ENCODE measurements at regions of chr5 and their contacts with region 1.

Region 1: DNA sequence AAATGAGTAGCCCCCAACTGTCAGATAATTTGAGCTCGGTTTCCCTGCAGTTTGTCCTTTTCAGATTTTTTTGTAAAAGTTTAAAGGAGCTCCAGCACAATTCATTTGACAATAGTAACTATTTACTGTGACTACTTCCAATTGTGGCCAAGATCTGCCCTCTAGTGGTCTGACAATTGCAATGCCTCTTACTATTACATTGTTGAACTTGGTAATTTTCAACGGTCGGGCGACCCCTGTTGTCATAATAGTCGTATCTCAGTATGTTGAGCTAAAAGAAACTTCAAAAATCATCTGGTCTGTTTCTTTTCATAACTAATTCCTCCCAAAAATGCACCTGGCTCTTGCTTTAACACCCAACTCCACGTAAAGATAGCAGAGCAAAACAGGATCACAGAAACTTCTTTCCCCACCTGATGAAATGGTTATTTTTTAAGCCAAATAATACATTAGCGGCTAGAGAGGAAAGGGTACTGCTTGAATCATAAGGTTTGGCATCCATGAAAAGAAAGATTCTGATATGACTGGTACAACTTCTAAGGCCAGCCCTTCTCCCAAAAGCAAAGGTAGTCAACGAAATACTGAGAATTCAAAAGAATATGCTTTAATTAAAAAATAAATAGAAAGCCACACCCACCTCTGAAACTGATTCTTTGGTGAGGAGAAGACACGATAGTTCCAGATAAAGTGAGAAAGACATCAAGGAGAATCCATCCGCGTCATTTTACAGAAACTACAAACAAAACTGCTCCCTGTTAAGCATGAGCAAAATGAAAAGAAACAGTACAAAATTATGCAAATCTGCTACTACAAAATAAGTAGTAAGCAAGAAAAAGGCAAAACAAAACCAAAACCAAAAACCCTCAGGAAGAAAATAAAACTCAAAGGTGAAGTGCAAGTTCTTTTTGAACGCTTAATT is 76.9 kb upstream of the HTR4 start:
- DNase-seq: peak; percentile 52
- H3K4me3 ChIP-seq: no peak overlapping the region; a peak in 1 of 4 replicates
- H3K27ac ChIP-seq: peak overlapping the region in 1 of 2 experiments; percentile 56; a peak in 2 of 4 replicates
- H3K4me1 ChIP-seq: peaks cover 0 to 15% of the 10 kb centered on the region in 2 experiments; a peak in 3 of 4 replicates
- H3K27me3 ChIP-seq: no peaks in the 10 kb centered on the region
- CTCF ChIP-seq: peak; percentile 99
- EP300 ChIP-seq: no peak
- RAD21 ChIP-seq: peak; percentile 99

Region 2: GRCh38 chr5:148290271-148291195 is 440.7 kb before region 1 on chr5:
- CTCF ChIA-PET with region 1: interaction called, 31 read pairs
- POLR2A ChIA-PET with region 1: no interaction called
- DNase-seq: peak; percentile 16
- H3K4me3 ChIP-seq: no peak overlapping the region
- H3K27ac ChIP-seq: no peak overlapping the region
- H3K4me1 ChIP-seq: no peaks in the 10 kb centered on the region
- H3K27me3 ChIP-seq: no peaks in the 10 kb centered on the region
- CTCF ChIP-seq: peak; percentile 54
- EP300 ChIP-seq: no peak
- RAD21 ChIP-seq: peak; percentile 71

Region 3: GRCh38 chr5:148437249-148437648 is 294.0 kb before region 1 on chr5:
- CTCF ChIA-PET with region 1: interaction called, 704 read pairs
- POLR2A ChIA-PET with region 1: no interaction called
- DNase-seq: no peak
- H3K4me3 ChIP-seq: no peak overlapping the region
- H3K27ac ChIP-seq: no peak overlapping the region
- H3K4me1 ChIP-seq: no peaks in the 10 kb centered on the region
- H3K27me3 ChIP-seq: no peaks in the 10 kb centered on the region
- CTCF ChIP-seq: no peak
- EP300 ChIP-seq: no peak
- RAD21 ChIP-seq: no peak

Region 4: GRCh38 chr5:148532962-148533670 is 198.1 kb before region 1 on chr5:
- CTCF ChIA-PET with region 1: interaction called, 12 read pairs
- POLR2A ChIA-PET with region 1: no interaction called
- DNase-seq: no peak
- H3K4me3 ChIP-seq: no peak overlapping the region
- H3K27ac ChIP-seq: no peak overlapping the region
- H3K4me1 ChIP-seq: no peaks in the 10 kb centered on the region
- H3K27me3 ChIP-seq: no peaks in the 10 kb centered on the region
- CTCF ChIP-seq: no peak
- EP300 ChIP-seq: no peak
- RAD21 ChIP-seq: no peak

Region 5: GRCh38 chr5:148697180-148697808 is 33.9 kb before region 1 on chr5:
- CTCF ChIA-PET with region 1: interaction called, 33 read pairs
- POLR2A ChIA-PET with region 1: no interaction called
- DNase-seq: no peak
- H3K4me3 ChIP-seq: peak overlapping the region in 1 of 2 experiments; percentile 44; a peak in 1 of 4 replicates
- H3K27ac ChIP-seq: peak overlapping the region in 1 of 2 experiments; percentile 7; a peak in 1 of 4 replicates
- H3K4me1 ChIP-seq: no peaks in the 10 kb centered on the region
- H3K27me3 ChIP-seq: no peaks in the 10 kb centered on the region
- CTCF ChIP-seq: no peak
- EP300 ChIP-seq: no peak
- RAD21 ChIP-seq: no peak

Region 6: DNA sequence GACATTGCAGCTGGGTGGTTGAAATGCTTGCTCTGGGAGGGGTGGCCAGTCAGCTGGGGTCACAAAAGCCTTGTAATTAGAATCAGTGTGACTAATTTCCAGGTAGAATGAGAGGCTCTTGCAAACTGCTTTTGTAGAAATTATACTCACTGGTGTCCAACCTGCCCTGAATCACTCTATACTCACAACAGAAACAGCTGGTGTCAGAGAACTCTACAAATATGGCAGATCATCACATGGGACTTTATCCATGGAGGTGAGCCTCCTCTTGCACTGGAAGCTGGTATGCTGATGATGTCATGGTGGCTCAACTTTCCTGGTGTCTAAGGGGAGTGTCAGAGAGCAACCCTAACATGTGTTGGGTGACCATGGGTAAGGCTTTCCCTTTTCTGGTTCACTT is 260.4 kb after region 1 on chr5:
- CTCF ChIA-PET with region 1: interaction called, 16 read pairs
- POLR2A ChIA-PET with region 1: no interaction called
- DNase-seq: no peak
- H3K4me3 ChIP-seq: no peak overlapping the region
- H3K27ac ChIP-seq: no peak overlapping the region
- H3K4me1 ChIP-seq: no peaks in the 10 kb centered on the region
- H3K27me3 ChIP-seq: no peaks in the 10 kb centered on the region
- CTCF ChIP-seq: no peak
- EP300 ChIP-seq: no peak
- RAD21 ChIP-seq: no peak

Region 7: GRCh38 chr5:149125386-149125891 is 394.2 kb after region 1 on chr5:
- CTCF ChIA-PET with region 1: interaction called, 31 read pairs
- POLR2A ChIA-PET with region 1: no interaction called
- DNase-seq: no peak
- H3K4me3 ChIP-seq: no peak overlapping the region
- H3K27ac ChIP-seq: no peak overlapping the region
- H3K4me1 ChIP-seq: no peaks in the 10 kb centered on the region
- H3K27me3 ChIP-seq: no peaks in the 10 kb centered on the region
- CTCF ChIP-seq: peak; percentile 36; the same call in 1 of the 2 replicates
- EP300 ChIP-seq: no peak
- RAD21 ChIP-seq: no peak

Measured in SK-N-SH (cell line).